ENCODE measurements at regions of chr1 and their contacts with region 1.

Region 1: GRCh38 chr1:160416369-160416768 is 16.0 kb downstream of the VANGL2 start:
- DNase-seq: peak in 1 of 2 experiments; percentile 40
- H3K4me3 ChIP-seq: no peak overlapping the region
- H3K4me3 Mint-ChIP-seq: no peak overlapping the region
- H3K27ac Mint-ChIP-seq: no peak overlapping the region
- H3K4me1 ChIP-seq: no peaks in the 10 kb centered on the region
- H3K4me1 Mint-ChIP-seq: no peaks in the 10 kb centered on the region
- H3K27me3 ChIP-seq: no peaks in the 10 kb centered on the region
- H3K27me3 Mint-ChIP-seq: peaks cover 7% of the 10 kb centered on the region
- CTCF ChIP-seq: peak; percentile 33 to 58

Region 2: GRCh38 chr1:160342953-160343869 is 73.2 kb before region 1 on chr1 and contains the starts of genes COPA and NCSTN:
- CTCF ChIA-PET with region 1: no interaction called
- POLR2A ChIA-PET with region 1: no interaction called
- intact Hi-C with region 1: loop called (anchors 1 kb)
- DNase-seq: peak; percentile 93 to 96
- H3K4me3 ChIP-seq: peak within 1 kb of the TSS; percentile 85
- H3K4me3 Mint-ChIP-seq: peak within 1 kb of the TSS; percentile 88
- H3K27ac Mint-ChIP-seq: peak within 1 kb of the TSS; percentile 97
- H3K4me1 ChIP-seq: 0 out of 2 replicates have a peak, but pooled peaks cover 6% of the 10 kb centered on the region
- H3K4me1 Mint-ChIP-seq: no peaks in the 10 kb centered on the region
- H3K27me3 ChIP-seq: no peaks in the 10 kb centered on the region
- H3K27me3 Mint-ChIP-seq: no peaks in the 10 kb centered on the region
- CTCF ChIP-seq: no peak
- total RNA-seq, gene COPA: 153 and 155 TPM in 2 replicates
- total RNA-seq, gene NCSTN: 89.5 and 102 TPM in 2 replicates

Region 3: DNA sequence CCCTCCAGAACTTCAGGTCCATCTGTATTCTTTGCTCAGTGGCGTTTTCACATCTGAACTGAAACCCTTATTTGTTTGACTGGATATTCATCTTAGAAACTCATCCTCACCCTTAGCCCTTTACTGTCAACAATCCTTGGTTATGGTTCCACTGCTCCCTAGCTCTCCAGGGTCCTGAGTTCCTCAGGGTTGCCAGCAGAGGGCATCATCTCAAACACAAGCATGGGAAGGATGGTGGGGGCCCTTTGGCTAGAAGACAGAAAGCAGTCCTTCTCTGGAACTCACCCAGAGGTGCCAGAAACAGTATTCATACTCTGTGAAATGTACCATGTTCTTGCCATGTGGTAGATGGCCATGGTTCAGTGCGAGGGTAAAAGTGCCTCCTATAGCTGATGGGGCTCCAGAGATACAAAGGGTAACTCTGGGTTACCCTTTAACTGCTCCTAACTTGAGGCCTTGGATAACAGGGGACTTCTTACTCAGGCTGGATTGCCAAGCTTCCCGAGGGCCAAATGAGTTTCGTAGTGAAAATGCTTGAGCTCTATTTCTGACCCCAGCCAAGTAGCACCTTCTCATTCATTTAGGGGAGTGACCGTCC is 61.9 kb before region 1 on chr1:
- CTCF ChIA-PET with region 1: interaction called, 8 read pairs
- POLR2A ChIA-PET with region 1: no interaction called
- intact Hi-C with region 1: loop called (anchors 1 kb)
- DNase-seq: peak in 1 of 2 experiments; percentile 37
- H3K4me3 ChIP-seq: no peak overlapping the region
- H3K4me3 Mint-ChIP-seq: no peak overlapping the region
- H3K27ac Mint-ChIP-seq: no peak overlapping the region
- H3K4me1 ChIP-seq: no peaks in the 10 kb centered on the region
- H3K4me1 Mint-ChIP-seq: no peaks in the 10 kb centered on the region
- H3K27me3 ChIP-seq: no peaks in the 10 kb centered on the region
- H3K27me3 Mint-ChIP-seq: no peaks in the 10 kb centered on the region
- CTCF ChIP-seq: peak; percentile 32 to 63